PC-3 (cell line): ENCODE measurements at regions of chr7 and their contacts with region 1.

Region 1: DNA sequence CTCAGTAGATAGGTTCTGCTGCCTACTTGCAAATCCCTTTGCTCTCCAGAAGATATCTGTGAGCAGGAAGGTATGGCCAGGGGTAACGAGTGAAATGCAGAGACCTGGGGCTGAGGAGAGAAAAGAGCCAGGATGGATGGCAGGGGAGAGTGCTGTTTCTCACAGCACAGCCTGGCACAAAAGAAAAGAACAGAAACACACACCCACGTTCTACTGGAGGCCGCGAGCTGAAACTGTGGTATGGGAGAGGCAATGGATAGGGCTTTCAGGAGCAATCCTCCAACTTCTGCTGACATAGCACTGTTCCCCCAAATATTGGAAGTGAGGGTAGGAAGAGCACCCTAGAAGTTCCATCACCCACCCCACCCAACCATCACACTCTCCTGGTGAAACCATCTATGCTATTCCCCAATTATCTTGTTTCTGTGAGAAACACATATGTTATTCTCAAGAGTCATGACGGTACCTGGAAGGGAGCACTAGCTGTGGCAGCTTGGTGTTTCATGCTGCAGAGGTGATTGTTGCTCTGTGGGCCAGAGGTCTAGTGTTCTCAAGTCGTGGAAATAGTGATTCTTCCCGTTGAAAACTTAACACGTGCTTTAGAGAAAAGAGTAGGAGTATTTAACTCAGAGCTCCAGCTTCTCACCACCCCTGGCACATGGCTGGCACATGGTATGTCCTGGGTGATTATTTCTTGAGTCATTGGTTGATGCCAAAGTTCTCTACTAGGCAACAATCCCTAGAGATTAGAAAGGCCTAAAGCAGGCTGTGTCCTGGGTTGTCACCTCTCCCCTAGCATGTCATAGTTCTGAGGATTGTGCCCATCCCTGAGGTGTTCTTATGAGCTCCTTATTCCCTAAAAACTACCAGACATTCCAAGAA is 198.3 kb downstream of the PLXNA4 start:
- DNase-seq: no peak
- ATAC-seq: no peak
- H3K4me3 ChIP-seq: no peak overlapping the region
- H3K27ac ChIP-seq: no peak overlapping the region
- H3K4me1 ChIP-seq: no peaks in the 10 kb centered on the region
- H3K27me3 ChIP-seq: no peaks in the 10 kb centered on the region
- CTCF ChIP-seq: no peak

Region 2: DNA sequence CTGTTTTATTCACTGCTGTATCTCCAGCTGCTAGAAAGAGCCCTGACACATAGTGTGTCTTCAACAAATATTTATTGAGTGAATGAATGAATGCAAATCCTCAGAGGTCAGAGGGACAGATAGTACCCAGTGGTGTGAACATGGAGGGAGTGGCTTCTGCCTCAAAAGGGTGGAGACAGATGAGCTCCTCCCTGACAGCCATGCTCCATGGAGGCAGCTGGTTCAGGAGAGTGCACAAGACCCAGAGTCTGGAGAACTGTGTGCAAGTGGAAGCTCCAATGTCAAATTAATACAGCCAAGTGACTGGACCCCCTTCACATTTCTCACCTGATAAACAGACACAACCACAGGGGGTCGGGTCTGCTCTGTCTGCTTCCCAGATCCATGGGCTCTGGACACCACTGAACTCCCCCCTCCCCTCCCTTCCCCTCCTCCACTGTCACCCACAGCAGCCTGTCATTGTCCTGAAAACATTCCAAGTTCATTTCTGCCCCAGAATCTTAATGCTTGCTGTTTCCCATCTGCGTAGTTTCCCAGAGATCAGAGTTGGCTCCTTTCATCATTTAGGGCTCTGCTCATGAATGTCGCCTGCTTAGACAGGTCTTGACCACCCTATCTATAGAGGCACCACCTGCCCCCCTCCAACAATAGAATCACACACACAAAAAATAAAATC is 508.6 kb before region 1 on chr7:
- CTCF ChIA-PET with region 1: no interaction called
- POLR2A ChIA-PET with region 1: no interaction called
- intact Hi-C with region 1: no loop called
- DNase-seq: no peak
- ATAC-seq: no peak
- H3K4me3 ChIP-seq: no peak overlapping the region
- H3K27ac ChIP-seq: no peak overlapping the region
- H3K4me1 ChIP-seq: no peaks in the 10 kb centered on the region
- H3K27me3 ChIP-seq: peaks cover 15% of the 10 kb centered on the region; the same call in 1 of the 2 replicates
- CTCF ChIP-seq: no peak

Region 3: GRCh38 chr7:133197972-133198544 is 820.1 kb after region 1 on chr7:
- CTCF ChIA-PET with region 1: no interaction called
- POLR2A ChIA-PET with region 1: interaction called, 11 read pairs
- intact Hi-C with region 1: no loop called
- DNase-seq: no peak
- ATAC-seq: no peak
- H3K4me3 ChIP-seq: no peak overlapping the region
- H3K27ac ChIP-seq: no peak overlapping the region
- H3K4me1 ChIP-seq: no peaks in the 10 kb centered on the region
- H3K27me3 ChIP-seq: peaks cover 26% of the 10 kb centered on the region
- CTCF ChIP-seq: no peak